ENCODE measurements at regions of chr19 and their contacts with region 1.

Region 1: GRCh38 chr19:42301656-42302203 is at the start of gene PRR19:
- DNase-seq: no peak
- ATAC-seq: peak; percentile 4 to 14
- H3K4me3 ChIP-seq: peak within 1 kb of the TSS; percentile 58 to 80 (median 67)
- H3K27ac ChIP-seq: peak within 1 kb of the TSS; percentile 41 to 78 (median 62)
- H3K4me1 ChIP-seq: peaks cover 16 to 18% of the 10 kb centered on the region in 2 donors
- H3K27me3 ChIP-seq: no peaks in the 10 kb centered on the region
- CTCF ChIP-seq: no peak
- POLR2A ChIP-seq: no peak
- total RNA-seq, gene PRR19: not detected

Region 2: DNA sequence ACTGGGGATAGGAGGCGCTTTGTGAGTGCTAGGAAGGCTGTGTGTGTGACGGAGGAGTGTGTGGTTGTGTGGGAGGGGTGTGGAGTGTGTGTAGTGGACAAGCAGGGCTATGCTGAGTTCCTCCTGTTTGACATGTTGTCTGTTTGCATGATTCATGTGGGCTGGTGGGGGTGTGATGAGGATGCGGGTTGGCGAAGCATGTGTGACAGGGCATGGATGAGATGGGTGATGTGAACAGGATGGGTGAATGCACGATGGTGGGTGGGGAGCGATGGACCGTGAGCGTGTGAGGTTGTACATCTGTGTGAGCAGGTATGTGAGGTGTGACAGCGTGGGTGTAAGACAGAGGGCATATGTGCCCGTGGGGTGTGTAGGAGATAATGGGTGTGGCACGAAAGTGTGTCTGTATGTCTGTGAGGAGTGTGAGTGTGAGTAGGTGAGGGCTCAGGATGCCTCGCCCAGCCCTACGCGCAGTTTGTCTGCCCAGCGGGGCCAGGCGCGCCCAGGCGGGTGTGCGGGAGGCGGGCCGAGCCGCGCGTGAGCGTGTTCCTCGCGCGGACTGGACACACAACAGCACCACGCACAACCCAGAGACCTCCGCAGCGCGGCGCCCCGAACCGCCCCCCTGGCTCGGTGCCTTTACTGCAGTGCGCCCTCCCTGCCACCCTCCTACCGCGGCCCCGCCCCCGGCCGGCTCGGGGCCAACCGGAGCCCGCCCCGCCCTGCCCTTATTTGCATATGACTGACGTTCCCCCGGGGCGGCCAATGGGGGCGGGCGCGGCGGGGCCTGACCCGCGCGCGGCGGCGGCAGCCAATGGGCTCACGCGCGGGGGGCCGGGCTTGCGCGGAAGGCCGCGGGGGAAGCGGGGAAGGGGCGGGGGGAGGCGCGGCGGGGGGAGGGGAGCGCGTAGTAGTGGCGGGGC is 18.3 kb before region 1 on chr19:
- in situ Hi-C with region 1: no loop called
- intact Hi-C with region 1: loop called (anchors 1 kb)
- DNase-seq: peak; percentile 89 to 96
- ATAC-seq: peak; percentile 64 to 71
- H3K4me3 ChIP-seq: peak overlapping the region; percentile 43 to 60 (median 58)
- H3K27ac ChIP-seq: peak overlapping the region; percentile 95 to 97 (median 96)
- H3K4me1 ChIP-seq: peaks cover 58 to 64% of the 10 kb centered on the region in 2 donors
- H3K27me3 ChIP-seq: no peaks in the 10 kb centered on the region
- CTCF ChIP-seq: no peak
- POLR2A ChIP-seq: peak in 1 of 2 donors; percentile 68

Region 3: DNA sequence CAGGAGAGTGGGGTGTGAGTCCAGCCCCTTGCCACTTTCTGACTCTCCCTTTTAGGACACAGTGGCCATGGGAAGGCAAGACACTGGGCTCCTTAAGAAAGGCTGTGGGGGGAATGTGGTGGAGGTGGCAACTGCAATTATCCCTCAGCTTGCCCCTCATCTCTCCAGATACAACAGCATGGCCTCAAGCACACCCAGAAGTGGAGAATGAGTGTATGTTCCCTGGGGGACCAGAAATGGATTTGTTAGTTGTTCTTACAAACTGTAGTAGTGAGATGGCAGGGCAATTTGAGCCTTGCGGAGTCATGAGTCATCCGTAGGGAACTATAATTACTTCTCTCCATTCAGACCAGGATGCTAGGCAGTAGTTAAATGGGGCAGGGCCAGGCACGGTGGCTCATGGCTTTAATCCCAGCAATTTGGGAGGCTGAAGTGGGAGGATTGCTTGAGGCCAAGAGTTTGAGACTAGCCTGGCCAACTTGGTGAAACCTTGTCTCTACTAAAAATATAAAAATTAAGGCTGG is 166.6 kb after region 1 on chr19:
- in situ Hi-C with region 1: no loop called
- intact Hi-C with region 1: no loop called
- DNase-seq: no peak
- ATAC-seq: no peak
- H3K4me3 ChIP-seq: no peak overlapping the region
- H3K27ac ChIP-seq: no peak overlapping the region
- H3K4me1 ChIP-seq: no peaks in the 10 kb centered on the region
- H3K27me3 ChIP-seq: peaks cover 0 to 4% (median 0%) of the 10 kb centered on the region in 3 donors
- CTCF ChIP-seq: no peak
- POLR2A ChIP-seq: no peak

Measured in gastrocnemius medialis (tissue), 4 donors.